PC-9 (cell line): ENCODE measurements at regions of chr14 and their contacts with region 1.

Region 1: DNA sequence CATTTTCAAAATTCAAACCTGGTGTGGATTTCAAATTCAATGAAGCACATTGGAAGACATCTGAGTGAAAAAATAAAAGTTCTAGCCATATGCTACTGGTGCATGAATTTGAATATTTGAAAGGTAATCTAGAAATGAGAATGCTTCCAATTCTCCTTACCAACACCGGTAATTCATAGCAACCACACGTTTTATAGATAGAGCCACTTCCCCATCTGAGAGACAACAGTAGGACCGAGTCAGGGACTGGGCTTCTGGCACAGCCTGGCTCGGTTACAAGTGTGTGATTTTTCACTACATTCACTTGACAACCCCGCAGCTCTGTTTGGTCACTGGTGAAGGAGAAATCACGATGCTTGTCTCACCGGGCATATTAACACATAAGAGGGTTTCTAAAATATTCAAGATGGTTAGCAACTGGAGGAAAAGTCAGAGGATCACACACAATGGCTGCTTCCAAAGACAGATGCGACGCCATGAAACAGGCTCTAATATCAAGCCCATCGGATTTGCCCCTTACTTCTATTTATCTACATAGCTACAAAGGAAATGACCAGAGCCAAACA is 86.5 kb upstream of the FOXN3 start:
- DNase-seq: no peak
- H3K4me3 ChIP-seq: no peak overlapping the region
- H3K27ac ChIP-seq: no peak overlapping the region
- H3K4me1 ChIP-seq: no peaks in the 10 kb centered on the region
- H3K27me3 ChIP-seq: peaks cover 30% of the 10 kb centered on the region
- CTCF ChIP-seq: no peak

Region 2: GRCh38 chr14:89430391-89431236 is 72.9 kb before region 1 on chr14:
- CTCF ChIA-PET with region 1: no interaction called
- POLR2A ChIA-PET with region 1: no interaction called
- intact Hi-C with region 1: no loop called
- DNase-seq: no peak
- H3K4me3 ChIP-seq: no peak overlapping the region
- H3K27ac ChIP-seq: no peak overlapping the region
- H3K4me1 ChIP-seq: no peaks in the 10 kb centered on the region
- H3K27me3 ChIP-seq: peaks cover 17% of the 10 kb centered on the region; the same call in 1 of the 2 replicates
- CTCF ChIP-seq: no peak

Region 3: GRCh38 chr14:89617481-89618329 is 114.2 kb after region 1 on chr14:
- CTCF ChIA-PET with region 1: interaction called, 16 read pairs
- POLR2A ChIA-PET with region 1: no interaction called
- intact Hi-C with region 1: no loop called
- DNase-seq: no peak
- H3K4me3 ChIP-seq: no peak overlapping the region
- H3K27ac ChIP-seq: no peak overlapping the region
- H3K4me1 ChIP-seq: no peaks in the 10 kb centered on the region
- H3K27me3 ChIP-seq: peaks cover 22% of the 10 kb centered on the region; the same call in 1 of the 2 replicates
- CTCF ChIP-seq: no peak